Spleen (tissue), 13 donors: ENCODE measurements at regions of chr7 and their contacts with region 1.

Region 1: DNA sequence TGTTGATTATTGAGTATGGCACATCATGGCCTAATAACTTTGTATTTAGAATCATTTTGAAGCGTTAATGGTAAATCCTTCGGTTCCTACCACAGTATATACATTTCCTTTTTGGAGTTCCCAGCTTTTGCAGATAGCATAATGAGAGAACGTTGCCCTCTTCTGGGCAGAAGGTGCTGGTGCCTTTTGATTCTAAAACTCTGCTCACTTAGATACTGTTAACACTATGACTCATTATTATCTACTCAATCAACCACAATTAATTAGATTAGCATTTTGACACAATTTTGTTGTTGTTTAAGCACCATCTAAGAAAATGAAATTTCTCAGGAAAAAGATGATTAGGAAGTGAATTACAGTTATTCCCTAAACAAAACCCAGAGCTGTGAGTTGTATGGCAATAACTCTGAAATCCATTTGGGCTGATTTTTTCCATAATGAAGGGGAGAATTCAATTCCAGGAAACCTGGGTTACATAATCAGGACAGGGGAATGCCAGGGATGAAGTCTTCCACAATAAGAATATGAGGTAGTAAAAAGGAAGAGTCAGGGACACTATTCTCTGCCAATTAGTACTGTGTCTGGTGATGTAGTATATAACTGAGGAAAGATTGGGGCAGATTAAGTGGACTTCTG is 11.5 kb upstream of the DLD start:
- DNase-seq: no peak
- H3K4me3 ChIP-seq: no peak overlapping the region
- H3K27ac ChIP-seq: no peak overlapping the region
- H3K4me1 ChIP-seq: peaks cover 0 to 30% (median 16%) of the 10 kb centered on the region in 6 donors
- H3K27me3 ChIP-seq: peaks cover 0 to 19% (median 0%) of the 10 kb centered on the region in 7 donors
- CTCF ChIP-seq: peak in 10 of 11 experiments; percentile 13 to 83 (median 66)
- POLR2A ChIP-seq: no peak

Region 2: GRCh38 chr7:107462740-107463444 is 416.6 kb before region 1 on chr7:
- intact Hi-C with region 1: loop called (anchors 10 kb)
- DNase-seq: peak; percentile 77
- H3K4me3 ChIP-seq: no peak overlapping the region
- H3K27ac ChIP-seq: no peak overlapping the region
- H3K4me1 ChIP-seq: no peaks in the 10 kb centered on the region
- H3K27me3 ChIP-seq: no peaks in the 10 kb centered on the region
- CTCF ChIP-seq: peak; percentile 30 to 81 (median 67)
- POLR2A ChIP-seq: no peak

Region 3: DNA sequence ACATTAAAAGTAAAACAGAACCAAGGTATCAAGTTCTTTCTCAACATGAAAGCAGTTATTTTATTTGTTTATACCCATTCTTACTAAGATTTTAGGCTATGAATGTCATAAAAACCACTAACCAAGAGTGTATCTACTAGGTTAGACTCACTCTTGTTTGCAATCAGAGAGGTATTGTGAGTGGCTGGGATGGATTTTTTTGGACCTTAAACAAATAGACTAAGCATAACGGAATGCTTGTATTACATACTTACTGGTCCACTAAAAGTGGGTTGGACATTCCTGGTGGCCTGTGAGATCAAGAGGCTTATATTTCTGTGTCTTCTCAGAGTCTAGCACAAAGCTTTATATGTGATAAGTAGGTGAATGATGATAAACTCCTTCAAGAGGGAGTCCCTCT is 168.2 kb before region 1 on chr7:
- intact Hi-C with region 1: no loop called
- DNase-seq: no peak
- H3K4me3 ChIP-seq: no peak overlapping the region
- H3K27ac ChIP-seq: no peak overlapping the region
- H3K4me1 ChIP-seq: no peaks in the 10 kb centered on the region
- H3K27me3 ChIP-seq: no peaks in the 10 kb centered on the region
- CTCF ChIP-seq: no peak
- POLR2A ChIP-seq: no peak

Region 4: DNA sequence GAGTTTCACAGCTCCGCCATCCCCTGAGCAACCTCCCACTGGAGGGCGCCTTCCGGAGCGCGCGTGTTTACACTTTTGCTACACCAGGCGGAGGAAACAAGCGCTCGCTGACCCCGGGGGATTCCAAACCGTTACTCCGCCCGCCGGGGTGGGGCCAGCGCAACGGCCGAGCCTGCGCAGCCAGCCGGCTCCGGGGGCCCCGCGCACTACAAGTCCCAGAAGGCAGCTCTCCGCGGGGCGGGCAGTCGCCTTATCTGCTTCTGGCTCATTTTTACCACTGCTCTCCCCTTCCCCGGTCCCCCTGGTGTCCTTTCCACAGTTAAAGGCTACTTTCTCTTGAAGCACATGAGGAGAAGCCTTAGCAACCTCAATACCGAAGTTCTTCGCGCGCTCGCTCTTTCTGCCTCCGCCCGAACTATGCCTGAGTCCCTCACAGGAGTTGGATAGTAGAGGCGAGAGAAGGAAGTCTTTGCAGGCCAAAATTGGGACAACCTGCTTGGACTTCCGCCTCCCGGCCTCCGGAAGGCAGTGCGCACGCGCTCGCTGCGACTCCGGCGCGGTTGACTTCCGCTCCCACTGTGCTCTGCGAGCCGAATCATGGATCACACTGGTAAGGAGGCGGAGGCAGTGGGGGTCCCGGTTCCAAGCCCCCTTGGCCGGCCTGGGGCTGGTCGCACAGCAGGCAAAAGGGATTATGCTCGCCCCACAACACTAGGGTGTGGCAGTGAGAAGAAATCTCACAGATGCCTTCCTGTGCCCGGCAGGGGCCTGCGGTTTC is 135.8 kb before region 1 on chr7 and contains the start of gene CBLL1:
- intact Hi-C with region 1: loop called (anchors 10 kb)
- DNase-seq: peak; percentile 100
- H3K4me3 ChIP-seq: peak within 1 kb of the TSS; percentile 77 to 89 (median 84)
- H3K27ac ChIP-seq: peak within 1 kb of the TSS; percentile 93 to 99 (median 98)
- H3K4me1 ChIP-seq: peaks cover 45 to 57% (median 48%) of the 10 kb centered on the region in 6 donors
- H3K27me3 ChIP-seq: no peaks in the 10 kb centered on the region
- CTCF ChIP-seq: peak; percentile 35 to 83 (median 65)
- POLR2A ChIP-seq: peak in 1 of 3 donors; percentile 90
- total RNA-seq, gene CBLL1: 25.3 to 41.0 (median 35.5) TPM

Region 5: DNA sequence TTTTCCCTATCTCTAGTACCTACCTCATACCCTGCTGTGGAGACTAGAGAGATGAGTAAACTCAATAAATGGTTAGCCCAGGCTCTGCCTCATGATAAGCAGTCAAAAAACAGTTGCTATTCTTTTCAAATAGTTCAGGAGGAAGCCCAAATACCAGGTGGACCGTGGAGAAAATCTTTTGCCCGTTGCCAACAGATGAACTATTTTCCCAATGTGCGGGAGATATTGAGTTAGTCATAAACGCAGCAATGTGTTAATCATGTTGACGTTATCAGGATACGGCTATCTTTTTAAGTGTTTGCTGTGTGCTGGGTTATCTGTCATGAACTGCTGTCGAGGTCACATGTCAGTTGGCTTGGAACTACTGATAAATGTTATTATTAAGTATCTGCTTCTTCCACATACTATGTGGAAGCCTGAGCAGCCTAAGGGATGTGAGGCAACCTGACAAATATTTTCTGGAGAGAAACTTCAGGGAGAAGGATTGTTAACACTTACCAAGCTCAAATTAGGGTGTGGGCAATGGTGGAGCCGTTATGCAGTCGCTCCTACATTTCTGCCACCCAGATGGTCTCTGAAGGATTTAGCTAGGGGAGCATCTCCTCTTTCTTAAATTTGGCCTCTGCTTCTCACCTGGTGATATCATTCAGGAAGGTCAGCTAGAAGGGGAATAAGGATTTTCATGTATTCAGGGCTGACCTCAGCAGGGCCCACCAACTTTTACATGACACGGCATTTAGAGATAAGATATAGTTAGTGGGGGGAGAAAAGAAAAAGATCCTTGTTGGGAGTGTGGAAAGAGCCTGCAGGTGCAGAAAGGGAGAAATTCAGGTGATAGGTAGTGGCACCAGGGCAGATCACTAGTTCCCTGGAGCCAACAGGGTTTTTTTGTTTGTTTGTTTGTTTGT is 43.0 kb before region 1 on chr7:
- intact Hi-C with region 1: no loop called
- DNase-seq: no peak
- H3K4me3 ChIP-seq: no peak overlapping the region
- H3K27ac ChIP-seq: no peak overlapping the region
- H3K4me1 ChIP-seq: no peaks in the 10 kb centered on the region
- H3K27me3 ChIP-seq: peaks cover 0 to 11% (median 0%) of the 10 kb centered on the region in 7 donors
- CTCF ChIP-seq: no peak
- POLR2A ChIP-seq: no peak

Region 6: GRCh38 chr7:108146070-108146837 is 266.7 kb after region 1 on chr7:
- intact Hi-C with region 1: loop called (anchors 10 kb)
- DNase-seq: no peak
- H3K4me3 ChIP-seq: peak overlapping the region in 1 of 8 donors; percentile 34
- H3K27ac ChIP-seq: no peak overlapping the region
- H3K4me1 ChIP-seq: peaks cover 0 to 9% (median 4%) of the 10 kb centered on the region in 6 donors
- H3K27me3 ChIP-seq: peaks cover 0 to 4% (median 0%) of the 10 kb centered on the region in 7 donors
- CTCF ChIP-seq: peak; percentile 28 to 80 (median 70)
- POLR2A ChIP-seq: peak in 1 of 3 donors; percentile 25

Region 7: GRCh38 chr7:108805808-108806397 is 926.4 kb after region 1 on chr7:
- intact Hi-C with region 1: no loop called
- DNase-seq: no peak
- H3K4me3 ChIP-seq: no peak overlapping the region
- H3K27ac ChIP-seq: no peak overlapping the region
- H3K4me1 ChIP-seq: no peaks in the 10 kb centered on the region
- H3K27me3 ChIP-seq: no peaks in the 10 kb centered on the region
- CTCF ChIP-seq: no peak
- POLR2A ChIP-seq: no peak